ENCODE measurements at regions of chr1 and their contacts with region 1.

Region 1: DNA sequence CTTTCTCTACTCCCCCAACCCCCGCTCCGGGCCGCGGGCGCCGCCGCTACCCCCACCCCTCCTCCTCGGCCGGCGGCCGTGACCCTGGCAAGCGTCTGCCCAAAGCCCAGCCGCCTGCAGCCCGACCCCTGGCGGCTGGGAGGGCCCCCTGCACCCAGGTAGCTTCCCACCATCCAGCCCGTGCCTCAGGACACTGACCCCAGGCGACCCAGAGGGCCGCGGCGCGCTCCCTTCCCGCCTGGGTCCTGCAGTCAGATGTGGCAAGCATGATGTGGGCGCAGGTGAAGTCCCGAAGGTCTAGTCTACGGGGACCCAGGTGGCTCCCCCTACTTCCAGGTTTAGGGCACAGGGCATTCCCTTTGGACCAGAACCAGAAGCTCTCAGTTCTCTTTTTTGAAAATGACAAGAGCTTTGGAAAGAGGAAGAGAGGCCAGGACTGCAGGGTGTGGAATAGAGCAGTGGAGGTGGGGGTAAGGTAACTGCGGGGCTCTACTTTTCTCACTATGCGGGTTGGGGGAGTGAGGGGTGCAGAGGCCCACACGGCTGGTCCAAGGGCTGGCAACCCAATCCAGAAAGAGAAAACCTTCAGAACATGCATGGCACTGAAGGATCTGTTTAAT is at the start of gene DENND4B:
- DNase-seq: peak; percentile 65
- H3K4me3 ChIP-seq: peak within 1 kb of the TSS; percentile 42 to 88 (median 73)
- H3K27ac ChIP-seq: peak within 1 kb of the TSS; percentile 63
- H3K4me1 ChIP-seq: peaks cover 9% of the 10 kb centered on the region
- H3K27me3 ChIP-seq: no peaks in the 10 kb centered on the region
- CTCF ChIP-seq: peak; percentile 89 to 97
- POLR2A ChIP-seq: no peak
- total RNA-seq, gene DENND4B: 54.3 and 57.8 TPM in 2 replicates

Region 2: DNA sequence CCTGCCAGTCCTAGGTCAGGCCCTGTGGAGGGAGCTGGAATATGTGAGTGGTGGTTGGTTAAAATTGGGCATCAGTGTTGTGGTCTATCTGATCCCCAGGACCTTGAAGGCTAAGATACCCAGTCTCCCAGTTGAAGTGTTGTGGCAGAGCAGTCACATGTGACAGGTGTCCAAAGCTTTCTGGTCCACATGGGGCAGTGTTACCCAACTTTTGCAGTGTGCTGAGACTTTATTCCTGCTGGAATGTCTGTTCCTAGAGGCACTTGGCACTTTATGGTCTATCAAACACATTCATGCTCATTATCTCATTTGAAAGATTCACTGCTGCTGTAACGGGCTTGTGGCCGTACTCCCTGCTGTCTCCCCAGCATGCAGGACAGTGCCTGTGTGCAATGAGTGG is 708.2 kb before region 1 on chr1:
- CTCF ChIA-PET with region 1: no interaction called
- POLR2A ChIA-PET with region 1: no interaction called
- dilution Hi-C with region 1: no loop called
- intact Hi-C with region 1: no loop called
- DNase-seq: no peak
- H3K4me3 ChIP-seq: no peak overlapping the region
- H3K27ac ChIP-seq: no peak overlapping the region
- H3K4me1 ChIP-seq: no peaks in the 10 kb centered on the region
- H3K27me3 ChIP-seq: no peaks in the 10 kb centered on the region
- CTCF ChIP-seq: no peak
- POLR2A ChIP-seq: no peak

Region 3: GRCh38 chr1:153734396-153735089 is 212.2 kb before region 1 on chr1:
- CTCF ChIA-PET with region 1: no interaction called
- POLR2A ChIA-PET with region 1: no interaction called
- dilution Hi-C with region 1: no loop called
- intact Hi-C with region 1: no loop called
- DNase-seq: no peak
- H3K4me3 ChIP-seq: no peak overlapping the region
- H3K27ac ChIP-seq: no peak overlapping the region
- H3K4me1 ChIP-seq: peaks cover 7% of the 10 kb centered on the region
- H3K27me3 ChIP-seq: no peaks in the 10 kb centered on the region
- CTCF ChIP-seq: no peak
- POLR2A ChIP-seq: no peak

Region 4: DNA sequence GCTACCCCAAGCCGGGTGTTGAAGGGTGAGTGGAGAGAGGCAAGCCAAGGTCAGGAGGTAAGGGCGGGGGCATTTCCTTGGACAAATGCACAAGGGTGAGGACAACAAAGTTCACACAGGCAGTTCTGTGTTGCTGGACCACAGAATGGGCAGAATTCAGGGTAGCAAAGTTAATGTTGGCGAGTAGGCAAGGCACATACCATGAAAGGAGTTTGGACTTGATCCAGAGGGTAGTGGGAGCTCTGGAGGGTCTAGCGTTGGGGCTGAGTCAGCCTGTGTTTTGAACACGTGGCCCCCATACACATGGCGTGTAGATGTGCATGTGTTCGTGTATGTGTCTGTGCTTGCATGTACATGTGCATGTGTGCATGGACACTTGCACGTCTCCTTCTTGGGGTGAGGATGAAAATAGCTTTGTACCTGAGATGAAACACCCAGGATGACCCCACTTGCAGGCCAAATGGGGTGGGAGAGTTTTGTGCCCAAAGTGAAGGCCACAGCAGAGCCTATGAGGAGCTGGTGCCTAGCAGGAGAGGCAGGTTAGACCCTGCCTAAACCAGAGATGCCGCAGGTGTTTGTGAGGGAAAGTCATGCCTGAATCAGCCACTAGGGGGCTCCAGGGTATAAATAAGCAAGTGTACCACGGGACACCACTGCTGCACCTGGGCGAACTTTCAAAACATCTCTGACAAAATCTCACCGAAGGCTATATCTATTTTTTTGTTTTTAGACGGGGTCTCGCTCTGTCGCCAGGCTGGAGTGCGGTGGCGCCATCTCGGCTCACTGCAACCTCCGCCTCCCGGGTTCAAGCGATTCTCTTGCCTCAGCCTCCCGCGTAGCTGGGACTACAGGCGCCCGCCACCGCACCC is 149.7 kb before region 1 on chr1:
- CTCF ChIA-PET with region 1: interaction called, 36 read pairs
- POLR2A ChIA-PET with region 1: no interaction called
- dilution Hi-C with region 1: no loop called
- intact Hi-C with region 1: loop called (anchors 1 kb)
- DNase-seq: peak; percentile 58
- H3K4me3 ChIP-seq: no peak overlapping the region
- H3K27ac ChIP-seq: no peak overlapping the region
- H3K4me1 ChIP-seq: no peaks in the 10 kb centered on the region
- H3K27me3 ChIP-seq: no peaks in the 10 kb centered on the region
- CTCF ChIP-seq: peak; percentile 68 to 81
- POLR2A ChIP-seq: no peak

Region 5: GRCh38 chr1:153827168-153827964 is 119.4 kb before region 1 on chr1:
- CTCF ChIA-PET with region 1: interaction called, 65 read pairs
- POLR2A ChIA-PET with region 1: no interaction called
- dilution Hi-C with region 1: no loop called
- intact Hi-C with region 1: loop called (anchors 2 kb)
- DNase-seq: no peak
- H3K4me3 ChIP-seq: no peak overlapping the region
- H3K27ac ChIP-seq: no peak overlapping the region
- H3K4me1 ChIP-seq: no peaks in the 10 kb centered on the region
- H3K27me3 ChIP-seq: no peaks in the 10 kb centered on the region
- CTCF ChIP-seq: no peak
- POLR2A ChIP-seq: no peak

Region 6: GRCh38 chr1:153922972-153923925 is 23.5 kb before region 1 on chr1 and contains the start of gene GATAD2B:
- CTCF ChIA-PET with region 1: interaction called, 34 read pairs
- POLR2A ChIA-PET with region 1: interaction called, 4 read pairs
- dilution Hi-C with region 1: no loop called
- intact Hi-C with region 1: loop called (anchors 1 kb)
- DNase-seq: peak; percentile 100
- H3K4me3 ChIP-seq: peak within 1 kb of the TSS; percentile 68 to 91 (median 85)
- H3K27ac ChIP-seq: peak within 1 kb of the TSS; percentile 60
- H3K4me1 ChIP-seq: peaks cover 24% of the 10 kb centered on the region
- H3K27me3 ChIP-seq: no peaks in the 10 kb centered on the region
- CTCF ChIP-seq: no peak
- POLR2A ChIP-seq: peak; percentile 80
- total RNA-seq, gene GATAD2B: 46.3 and 49.2 TPM in 2 replicates

Region 7: GRCh38 chr1:153958111-153958960 is 11.6 kb after region 1 on chr1 and contains the start of gene CRTC2:
- CTCF ChIA-PET with region 1: interaction called, 25 read pairs
- POLR2A ChIA-PET with region 1: interaction called, 5 read pairs
- dilution Hi-C with region 1: no loop called
- intact Hi-C with region 1: loop called (anchors 1 kb)
- DNase-seq: peak; percentile 98
- H3K4me3 ChIP-seq: peak within 1 kb of the TSS; percentile 47 to 80 (median 75)
- H3K27ac ChIP-seq: peak within 1 kb of the TSS; percentile 18
- H3K4me1 ChIP-seq: peaks cover 35% of the 10 kb centered on the region
- H3K27me3 ChIP-seq: no peaks in the 10 kb centered on the region
- CTCF ChIP-seq: no peak
- POLR2A ChIP-seq: peak; percentile 33
- total RNA-seq, gene CRTC2: 39.0 and 42.2 TPM in 2 replicates

Region 8: DNA sequence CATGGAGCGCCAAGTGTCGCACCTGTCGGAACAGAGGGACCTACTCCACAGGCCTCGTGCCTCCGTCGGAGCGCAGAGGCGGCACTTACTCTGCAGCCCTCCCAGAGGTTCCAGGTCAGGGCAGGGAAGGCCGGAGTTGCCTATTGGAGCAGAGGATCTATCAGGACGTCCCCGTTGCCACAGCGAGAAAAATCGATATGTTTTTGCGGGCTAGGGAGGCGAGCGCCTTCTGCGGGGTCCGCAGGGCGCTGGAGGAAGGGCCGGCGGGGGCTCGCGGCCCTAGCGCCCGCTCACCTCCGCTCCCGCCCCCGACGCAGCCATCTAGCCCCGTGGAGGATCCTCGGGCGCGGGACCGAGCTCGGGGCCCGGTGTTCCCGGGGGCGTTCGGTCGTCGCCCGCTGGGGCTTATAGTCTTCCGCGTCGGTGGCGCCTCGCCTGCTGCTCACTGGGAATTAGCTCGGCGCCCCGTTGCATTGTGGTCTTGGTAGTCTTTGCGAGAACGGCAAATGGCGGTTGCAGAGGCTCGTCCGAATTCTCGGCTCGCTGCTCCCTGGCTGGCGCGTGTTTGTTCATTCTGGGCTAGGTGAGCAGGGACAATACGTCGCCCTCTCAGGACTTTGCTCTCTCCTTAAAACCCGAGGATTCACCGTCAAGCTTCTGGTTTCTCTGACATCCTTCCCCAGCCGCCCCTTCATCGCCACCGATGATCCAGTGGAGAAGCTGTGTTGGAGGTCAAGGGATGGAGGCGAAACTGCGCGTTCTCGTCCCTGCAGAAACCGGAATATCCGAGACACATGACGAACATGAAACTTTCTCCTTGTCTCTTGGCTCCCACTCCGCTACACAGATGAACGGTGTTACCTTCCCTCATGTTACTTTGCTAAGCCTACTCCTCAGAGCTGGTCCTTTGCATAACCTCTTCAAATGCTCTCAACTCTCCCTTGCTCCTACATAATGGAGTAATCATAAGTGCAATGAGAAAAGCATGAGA is 30.8 kb after region 1 on chr1 and contains the start of gene JTB:
- CTCF ChIA-PET with region 1: interaction called, 14 read pairs
- POLR2A ChIA-PET with region 1: no interaction called
- dilution Hi-C with region 1: no loop called
- intact Hi-C with region 1: no loop called
- DNase-seq: peak; percentile 82
- H3K4me3 ChIP-seq: peak within 1 kb of the TSS; percentile 50 to 91 (median 70)
- H3K27ac ChIP-seq: peak within 1 kb of the TSS; percentile 4
- H3K4me1 ChIP-seq: peaks cover 10% of the 10 kb centered on the region
- H3K27me3 ChIP-seq: no peaks in the 10 kb centered on the region
- CTCF ChIP-seq: no peak
- POLR2A ChIP-seq: peak; percentile 94
- total RNA-seq, gene JTB: 89.0 and 90.2 TPM in 2 replicates